CD14-positive monocyte (primary cell): ENCODE measurements at regions of chr7 and their contacts with region 1.

Region 1: GRCh38 chr7:83732305-83732704 is 83.4 kb upstream of the SEMA3E start:
- DNase-seq: no peak
- H3K4me3 ChIP-seq: no peak overlapping the region
- H3K4me3 Mint-ChIP-seq: no peak overlapping the region
- H3K27ac ChIP-seq: no peak overlapping the region
- H3K27ac Mint-ChIP-seq: no peak overlapping the region
- H3K4me1 ChIP-seq: no peaks in the 10 kb centered on the region
- H3K4me1 Mint-ChIP-seq: no peaks in the 10 kb centered on the region
- H3K27me3 ChIP-seq: no peaks in the 10 kb centered on the region
- H3K27me3 Mint-ChIP-seq: no peaks in the 10 kb centered on the region
- CTCF ChIP-seq: no peak

Region 2: GRCh38 chr7:83798489-83798888 is 66.2 kb after region 1 on chr7:
- intact Hi-C with region 1: loop called in 1 of 2 experiments (anchors 10 kb)
- DNase-seq: no peak
- H3K4me3 ChIP-seq: no peak overlapping the region
- H3K4me3 Mint-ChIP-seq: no peak overlapping the region
- H3K27ac ChIP-seq: no peak overlapping the region
- H3K27ac Mint-ChIP-seq: no peak overlapping the region
- H3K4me1 ChIP-seq: no peaks in the 10 kb centered on the region
- H3K4me1 Mint-ChIP-seq: no peaks in the 10 kb centered on the region
- H3K27me3 ChIP-seq: no peaks in the 10 kb centered on the region
- H3K27me3 Mint-ChIP-seq: peaks cover 0 to 2% (median 0%) of the 10 kb centered on the region in 3 donors
- CTCF ChIP-seq: no peak